ENCODE measurements at regions of chr7 and their contacts with region 1.

Region 1: DNA sequence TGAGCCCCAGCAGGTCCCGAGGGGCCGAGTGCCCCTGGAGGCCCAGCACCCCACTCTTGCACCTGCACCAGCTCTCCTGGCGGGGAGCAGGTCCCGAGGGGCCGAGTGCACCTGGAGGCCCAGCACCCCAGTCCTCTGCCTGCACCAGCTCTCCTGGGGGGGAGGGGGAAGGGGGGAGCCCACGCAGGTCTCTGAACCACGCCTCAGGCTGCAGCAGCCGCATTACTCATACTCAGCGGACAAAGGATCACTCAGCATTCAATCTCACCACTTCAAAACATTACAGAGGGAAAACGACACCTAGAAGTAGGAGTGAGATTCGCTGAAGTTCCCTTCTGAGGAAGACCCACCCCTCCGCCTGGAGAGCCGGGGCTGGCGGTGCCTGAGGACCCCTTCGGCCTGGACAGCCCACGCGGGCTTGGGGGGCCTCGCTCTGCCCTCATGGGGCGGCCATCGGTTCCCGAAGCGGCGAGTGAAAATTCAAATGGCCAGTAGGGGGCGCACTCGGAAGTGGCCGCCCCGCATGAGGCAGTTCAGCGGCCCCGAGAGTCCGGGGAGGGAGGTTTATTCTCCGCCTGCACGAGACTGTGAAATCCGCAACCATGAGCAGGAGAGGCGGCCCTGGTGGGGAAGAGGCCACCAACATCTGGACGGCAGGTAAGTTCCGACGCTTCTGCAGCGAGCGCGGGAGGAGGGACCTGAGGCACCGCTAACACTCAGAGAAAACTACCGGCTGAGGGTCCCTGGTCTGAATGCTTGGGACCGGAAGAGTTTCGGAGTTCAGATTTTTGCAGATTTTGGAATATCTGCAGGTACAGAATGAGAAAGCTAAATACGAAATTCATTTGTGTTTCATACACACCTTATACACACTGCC is 1.1 kb upstream of the GPER1 start:
- DNase-seq: no peak
- H3K4me3 ChIP-seq: peak overlapping the region; percentile 59
- H3K27ac ChIP-seq: peak overlapping the region; percentile 47
- H3K27me3 ChIP-seq: no peaks in the 10 kb centered on the region
- CTCF ChIP-seq: peak; percentile 88

Region 2: GRCh38 chr7:657565-658119 is 429.2 kb before region 1 on chr7:
- CTCF ChIA-PET with region 1: no interaction called
- POLR2A ChIA-PET with region 1: no interaction called
- DNase-seq: no peak
- H3K4me3 ChIP-seq: no peak overlapping the region
- H3K27ac ChIP-seq: no peak overlapping the region
- H3K27me3 ChIP-seq: no peaks in the 10 kb centered on the region
- CTCF ChIP-seq: no peak

Region 3: GRCh38 chr7:974820-975681 is 111.8 kb before region 1 on chr7 and contains the start of gene COX19:
- CTCF ChIA-PET with region 1: interaction called, 10 read pairs
- POLR2A ChIA-PET with region 1: no interaction called
- DNase-seq: peak; percentile 68
- H3K4me3 ChIP-seq: peak within 1 kb of the TSS; percentile 93
- H3K27ac ChIP-seq: peak within 1 kb of the TSS; percentile 83
- H3K27me3 ChIP-seq: no peaks in the 10 kb centered on the region
- CTCF ChIP-seq: no peak
- polyA plus RNA-seq, gene COX19: 6.5 and 6.8 TPM in 2 replicates

Region 4: DNA sequence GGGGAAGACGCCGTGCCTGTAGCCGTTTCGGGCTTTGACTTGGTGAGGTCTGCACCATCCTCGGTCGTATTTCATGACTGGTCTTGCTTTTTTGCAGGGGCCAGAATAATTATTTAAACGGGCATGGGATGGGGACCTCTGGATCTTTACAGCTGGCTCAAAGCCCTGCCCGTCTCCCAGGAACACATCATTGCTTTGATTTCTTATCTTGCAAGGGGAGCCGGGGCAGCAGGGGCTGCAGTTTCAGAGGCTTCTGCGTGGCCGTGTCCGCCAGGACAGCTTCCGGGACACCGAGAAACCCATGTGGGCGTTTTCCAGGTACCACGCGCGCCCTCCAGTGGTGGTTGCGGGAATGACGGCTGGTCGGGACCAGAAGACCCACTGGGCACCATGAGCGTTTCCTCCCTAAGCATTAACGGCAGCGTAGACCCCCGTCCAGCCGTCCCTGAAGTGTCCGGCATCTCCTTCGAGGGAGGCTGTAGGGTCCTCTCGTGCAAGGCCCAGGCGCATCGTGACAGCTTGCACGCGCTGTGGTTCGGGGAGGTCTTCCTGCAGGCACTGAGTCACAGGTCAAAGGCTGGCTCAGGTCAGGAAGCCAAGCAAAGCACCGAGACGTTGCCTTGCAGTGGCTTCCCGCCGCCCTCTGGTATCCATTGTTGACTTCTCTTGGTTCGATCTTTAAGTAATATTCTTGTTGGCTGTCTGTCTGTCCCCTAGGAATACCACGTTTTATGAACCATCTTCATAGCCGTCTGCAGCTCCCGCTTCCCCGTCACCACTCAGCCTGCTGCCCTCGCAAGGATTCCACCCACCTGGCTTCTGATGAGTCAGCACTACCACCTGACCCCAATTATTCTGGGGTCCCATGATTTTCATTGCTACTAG is 89.4 kb after region 1 on chr7:
- CTCF ChIA-PET with region 1: interaction called, 13 read pairs
- POLR2A ChIA-PET with region 1: no interaction called
- DNase-seq: no peak
- H3K4me3 ChIP-seq: peak overlapping the region; percentile 20; the same call in 1 of the 2 replicates
- H3K27ac ChIP-seq: peak overlapping the region; percentile 39
- H3K27me3 ChIP-seq: peaks cover 6% of the 10 kb centered on the region
- CTCF ChIP-seq: peak; percentile 86